Aorta (tissue), 5 donors: ENCODE measurements at regions of chr3 and their contacts with region 1.

Region 1: DNA sequence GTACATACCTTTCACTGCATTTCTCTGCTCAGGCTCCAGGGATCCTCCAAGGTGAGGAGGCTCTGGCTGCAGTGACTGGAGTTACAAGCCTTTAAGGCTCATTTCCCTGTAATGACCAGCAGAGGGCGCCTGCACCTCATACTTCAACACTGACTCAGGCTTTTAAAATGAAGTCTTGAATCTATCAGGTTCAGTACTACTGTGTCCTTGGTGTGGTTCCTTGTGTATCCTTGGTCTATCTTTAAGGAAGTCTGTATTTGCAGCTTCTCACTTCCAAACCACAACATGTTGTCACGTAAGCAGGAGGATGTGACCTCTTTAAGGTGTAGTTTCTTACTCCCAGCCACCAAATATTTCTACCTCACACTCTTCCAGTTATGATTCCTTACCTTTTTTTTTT is 122.5 kb upstream of the ZBED2 start:
- DNase-seq: peak; percentile 66 to 79
- ATAC-seq: peak; percentile 93
- H3K4me3 ChIP-seq: no peak overlapping the region
- H3K27ac ChIP-seq: no peak overlapping the region
- H3K4me1 ChIP-seq: no peaks in the 10 kb centered on the region
- H3K27me3 ChIP-seq: no peaks in the 10 kb centered on the region

Region 2: DNA sequence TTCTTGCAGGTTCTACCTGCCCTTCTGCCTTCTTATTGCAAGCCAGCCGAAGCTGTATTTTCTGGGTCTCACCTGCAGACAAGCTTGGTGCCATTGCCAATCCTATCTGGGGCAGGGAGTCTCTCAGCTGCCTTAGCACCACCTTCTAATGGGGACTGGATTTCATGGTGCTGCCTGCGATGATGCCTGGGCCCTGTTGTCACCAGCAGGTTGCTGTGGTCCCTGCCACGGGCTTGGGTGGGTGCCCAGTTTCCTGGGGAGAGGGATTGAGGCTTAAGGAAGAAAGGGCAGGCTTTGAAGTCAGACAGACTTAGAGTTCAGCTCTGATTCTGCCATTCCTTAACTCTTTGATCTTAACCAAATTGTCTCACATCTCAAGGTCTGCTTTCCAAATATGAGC is 263.1 kb before region 1 on chr3:
- intact Hi-C with region 1: no loop called
- DNase-seq: no peak
- ATAC-seq: no peak
- H3K4me3 ChIP-seq: no peak overlapping the region
- H3K27ac ChIP-seq: no peak overlapping the region
- H3K4me1 ChIP-seq: no peaks in the 10 kb centered on the region
- H3K27me3 ChIP-seq: no peaks in the 10 kb centered on the region

Region 3: GRCh38 chr3:111803123-111803593 is 85.6 kb after region 1 on chr3:
- intact Hi-C with region 1: loop called in 1 of 2 experiments (anchors 5 kb)
- DNase-seq: peak; percentile 91 to 92
- ATAC-seq: peak; percentile 87
- H3K4me3 ChIP-seq: no peak overlapping the region
- H3K27ac ChIP-seq: peak overlapping the region in 1 of 2 donors; percentile 27
- H3K4me1 ChIP-seq: peaks cover 0 to 9% of the 10 kb centered on the region in 2 donors
- H3K27me3 ChIP-seq: no peaks in the 10 kb centered on the region

Region 4: DNA sequence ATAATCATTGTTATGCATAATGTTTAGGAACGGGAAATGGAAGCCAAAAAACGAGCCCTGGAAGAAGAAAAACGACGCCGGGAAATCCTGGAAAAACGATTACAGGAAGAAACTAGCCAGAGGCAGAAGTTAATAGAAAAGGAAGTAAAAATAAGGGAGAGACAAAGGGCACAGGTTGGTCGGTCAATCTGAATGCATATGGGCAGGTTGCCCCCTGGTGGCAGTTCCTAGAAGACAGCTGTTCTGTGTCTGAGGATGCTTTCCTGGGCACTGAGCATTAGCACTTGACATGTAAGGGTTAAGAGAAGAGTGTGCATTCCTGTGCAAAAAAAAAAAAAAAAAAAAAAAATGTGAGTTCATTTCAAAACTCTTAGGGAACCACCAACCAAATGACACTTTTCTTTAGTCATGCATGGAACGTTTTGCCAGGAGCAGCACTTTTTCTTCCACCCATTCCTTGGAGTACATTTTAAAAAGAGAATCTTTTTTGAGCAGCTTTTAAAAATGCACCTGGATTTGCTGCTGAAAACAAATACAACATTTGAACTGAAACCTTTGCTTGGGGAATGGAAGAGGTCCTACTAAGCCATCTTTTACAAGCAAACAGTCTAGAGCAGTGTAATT is 250.2 kb after region 1 on chr3:
- intact Hi-C with region 1: loop called (anchors 1 to 5 kb)
- DNase-seq: peak; percentile 88 to 90
- ATAC-seq: peak; percentile 93
- H3K4me3 ChIP-seq: no peak overlapping the region
- H3K27ac ChIP-seq: no peak overlapping the region
- H3K4me1 ChIP-seq: peaks cover 0 to 2% of the 10 kb centered on the region in 2 donors
- H3K27me3 ChIP-seq: no peaks in the 10 kb centered on the region